HAP-1 (cell line): ENCODE measurements at regions of chr3 and their contacts with region 1.

Region 1: GRCh38 chr3:25664810-25665314 is at the start of gene TOP2B:
- DNase-seq: peak; percentile 92 to 96
- H3K4me3 ChIP-seq: peak within 1 kb of the TSS; percentile 72
- H3K4me1 ChIP-seq: peaks cover 25% of the 10 kb centered on the region
- H3K27me3 ChIP-seq: peaks cover 7% of the 10 kb centered on the region

Region 2: GRCh38 chr3:25897019-25897418 is 232.2 kb after region 1 on chr3:
- in situ Hi-C with region 1: loop called (anchors 25 kb)
- DNase-seq: peak; percentile 74 to 85
- H3K4me3 ChIP-seq: no peak overlapping the region
- H3K4me1 ChIP-seq: no peaks in the 10 kb centered on the region
- H3K27me3 ChIP-seq: 0 out of 2 replicates have a peak, but pooled peaks cover 2% of the 10 kb centered on the region